Ovary (tissue), 10 donors: ENCODE measurements at regions of chr5 and their contacts with region 1.

Region 1: GRCh38 chr5:134738133-134738962 is at the start of gene CAMLG:
- DNase-seq: peak; percentile 98 to 99 (median 98)
- H3K4me3 ChIP-seq: peak within 1 kb of the TSS; percentile 61
- H3K27ac ChIP-seq: peak within 1 kb of the TSS; percentile 67 to 94
- H3K4me1 ChIP-seq: peaks cover 2% of the 10 kb centered on the region
- H3K27me3 ChIP-seq: no peaks in the 10 kb centered on the region
- CTCF ChIP-seq: peak in 2 of 3 donors; percentile 53 to 62
- EP300 ChIP-seq: no peak
- POLR2A ChIP-seq: peak; percentile 94
- total RNA-seq, gene CAMLG: 40.6 to 78.5 (median 65.3) TPM

Region 2: DNA sequence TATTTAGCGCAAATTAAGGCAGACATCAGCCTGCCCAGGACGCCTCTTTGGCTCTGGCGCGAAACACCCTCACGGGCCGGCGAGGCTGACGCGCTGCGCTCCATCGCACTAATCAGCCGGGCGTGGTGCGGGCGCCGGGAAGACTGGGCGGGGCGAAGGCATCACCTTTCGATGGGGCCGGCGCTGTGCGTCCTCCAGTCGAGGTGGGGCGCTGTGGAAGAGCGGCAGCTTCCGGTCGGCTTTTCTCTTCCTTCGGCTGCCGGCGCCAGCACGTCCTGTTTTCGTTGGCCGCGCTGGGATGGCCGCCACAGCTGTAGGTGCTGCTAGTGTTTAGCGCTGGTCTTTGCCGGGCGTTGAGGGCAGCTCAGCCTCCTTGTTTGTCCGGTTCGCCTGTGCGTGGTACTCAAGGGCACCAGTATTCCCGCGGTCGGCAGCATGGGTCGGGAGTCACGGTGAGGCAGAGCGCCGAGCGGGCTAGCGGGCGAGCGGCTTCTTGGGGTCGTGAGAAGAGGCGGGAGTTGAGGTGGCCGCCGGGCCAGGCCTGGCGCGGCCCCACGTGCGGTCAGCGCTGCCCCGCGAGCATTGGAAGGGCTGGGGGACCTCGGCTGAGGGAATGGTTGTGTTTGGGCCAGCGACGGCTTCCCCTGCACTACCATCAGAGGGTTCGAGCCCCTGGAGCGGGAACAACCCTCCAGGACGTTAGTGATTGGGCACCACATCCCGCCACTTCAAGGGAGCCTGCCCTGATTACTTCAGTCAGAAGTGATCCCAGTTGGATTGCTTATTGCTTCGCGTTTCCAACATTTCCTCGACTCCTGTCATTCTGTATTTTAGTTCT is 20.4 kb after region 1 on chr5 and contains the start of gene DDX46:
- intact Hi-C with region 1: loop called in 1 of 4 experiments (anchors 1 kb)
- DNase-seq: peak; percentile 88 to 96 (median 93)
- H3K4me3 ChIP-seq: peak within 1 kb of the TSS; percentile 58
- H3K27ac ChIP-seq: no peak within 1 kb of the TSS
- H3K4me1 ChIP-seq: peaks cover 4% of the 10 kb centered on the region
- H3K27me3 ChIP-seq: no peaks in the 10 kb centered on the region
- CTCF ChIP-seq: peak; percentile 43 to 79 (median 75)
- EP300 ChIP-seq: no peak
- POLR2A ChIP-seq: no peak
- total RNA-seq, gene DDX46: 27.4 to 54.7 (median 41.1) TPM

Region 3: DNA sequence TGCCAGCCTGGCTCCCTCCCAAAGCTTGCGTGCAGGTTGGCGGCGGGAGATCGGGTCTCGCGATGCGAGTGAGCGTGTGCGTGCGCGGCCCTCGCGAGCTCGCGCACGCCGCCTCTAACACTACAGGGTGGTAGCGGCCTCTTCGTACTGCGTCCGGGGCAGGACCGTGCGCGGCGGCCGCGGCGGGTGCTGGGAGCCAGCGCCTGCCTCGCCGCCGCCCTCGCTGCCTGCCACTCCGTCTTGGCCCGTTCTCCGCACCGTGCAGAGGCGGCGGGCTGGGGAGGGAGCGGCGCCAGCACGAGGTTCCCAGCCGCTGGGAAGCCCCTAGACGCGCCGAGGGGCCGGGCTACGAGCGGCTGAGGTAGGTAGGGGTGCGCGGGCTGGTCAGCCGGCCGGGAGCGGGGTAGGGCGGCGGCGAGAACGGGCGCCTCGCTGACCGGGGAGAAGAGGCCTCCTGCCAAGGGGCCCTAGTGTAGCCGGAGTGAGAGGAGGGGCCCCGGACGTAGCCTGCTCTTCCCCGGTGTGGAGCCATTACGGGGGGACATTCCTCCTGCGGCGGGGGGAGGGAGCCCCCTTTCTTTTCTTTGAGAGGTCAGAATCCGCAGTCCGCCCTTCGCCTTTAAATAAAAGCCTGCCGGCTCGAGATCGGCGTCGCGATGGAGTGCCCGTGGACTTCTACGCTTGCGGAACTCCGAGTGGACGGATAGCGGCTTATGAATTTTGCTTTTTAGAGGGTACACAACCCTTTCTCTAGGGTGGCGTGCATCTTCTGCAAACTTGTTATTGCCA is 107.7 kb after region 1 on chr5 and contains the start of gene C5orf24:
- intact Hi-C with region 1: loop called in 1 of 4 experiments (anchors 5 kb)
- DNase-seq: peak; percentile 95 to 97 (median 97)
- H3K4me3 ChIP-seq: peak within 1 kb of the TSS; percentile 91
- H3K27ac ChIP-seq: peak within 1 kb of the TSS; percentile 84
- H3K4me1 ChIP-seq: peaks cover 1% of the 10 kb centered on the region
- H3K27me3 ChIP-seq: no peaks in the 10 kb centered on the region
- CTCF ChIP-seq: no peak
- EP300 ChIP-seq: no peak
- POLR2A ChIP-seq: peak; percentile 88
- total RNA-seq, gene C5orf24: 34.5 to 46.8 (median 36.8) TPM

Region 4: DNA sequence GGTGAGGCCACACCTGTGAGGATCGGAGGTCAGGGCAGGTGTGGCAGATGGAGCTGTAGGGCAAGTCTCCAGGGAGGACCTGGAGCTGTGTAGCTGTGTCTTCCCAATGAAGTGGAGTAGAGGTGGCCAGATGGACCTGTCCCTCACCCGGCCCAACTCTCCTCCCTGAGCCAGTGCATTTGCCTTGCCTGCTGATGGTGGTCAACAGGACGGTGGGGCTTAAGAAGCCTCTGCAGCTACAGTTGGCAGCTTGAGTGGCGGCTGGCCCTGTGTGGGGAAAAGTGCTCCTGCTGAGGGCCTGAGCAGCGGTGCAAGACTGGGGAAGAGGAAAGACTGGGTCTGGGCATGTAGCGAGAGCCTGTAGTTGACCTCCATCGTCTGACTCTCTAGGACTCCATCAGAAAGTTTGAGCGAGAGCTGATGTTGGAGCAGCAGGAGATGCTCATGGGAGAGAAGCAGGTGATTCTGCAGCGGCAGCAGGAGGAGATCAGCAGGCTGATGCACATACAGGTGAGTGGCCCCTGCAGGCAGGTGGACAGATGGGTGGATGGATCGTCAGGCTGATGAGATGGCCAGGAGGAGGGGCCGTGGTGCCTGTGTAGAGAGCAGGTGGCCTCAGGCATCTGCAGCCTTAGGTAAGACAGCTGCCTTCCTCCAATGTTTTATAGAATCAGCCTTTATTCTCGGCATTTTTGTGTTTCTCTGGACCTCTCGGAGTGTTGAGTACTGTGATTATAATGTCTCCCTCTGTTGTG is 270.8 kb after region 1 on chr5:
- intact Hi-C with region 1: no loop called
- DNase-seq: no peak
- H3K4me3 ChIP-seq: no peak overlapping the region
- H3K27ac ChIP-seq: no peak overlapping the region
- H3K4me1 ChIP-seq: no peaks in the 10 kb centered on the region
- H3K27me3 ChIP-seq: no peaks in the 10 kb centered on the region
- CTCF ChIP-seq: no peak
- EP300 ChIP-seq: no peak
- POLR2A ChIP-seq: no peak